CD8-positive, alpha-beta memory T cell (primary cell): ENCODE measurements at regions of chr9 and their contacts with region 1.

Region 1: GRCh38 chr9:114653556-114654159 is 3.9 kb downstream of the TEX53 start:
- DNase-seq: peak; percentile 74 to 84 (median 74)
- H3K4me3 ChIP-seq: no peak overlapping the region
- H3K4me3 Mint-ChIP-seq: no peak overlapping the region
- H3K27ac ChIP-seq: no peak overlapping the region
- H3K27ac Mint-ChIP-seq: peak overlapping the region in 1 of 8 donors; percentile 35
- H3K4me1 ChIP-seq: peaks cover 10% of the 10 kb centered on the region
- H3K4me1 Mint-ChIP-seq: peaks cover 6 to 14% (median 9%) of the 10 kb centered on the region in 3 donors
- H3K27me3 ChIP-seq: no peaks in the 10 kb centered on the region
- H3K27me3 Mint-ChIP-seq: no peaks in the 10 kb centered on the region

Region 2: GRCh38 chr9:114397848-114398605 is 255.6 kb before region 1 on chr9:
- CTCF ChIA-PET with region 1: interaction called, 13 read pairs
- POLR2A ChIA-PET with region 1: no interaction called
- DNase-seq: peak; percentile 92 to 96 (median 95)
- H3K4me3 ChIP-seq: peak overlapping the region; percentile 89
- H3K4me3 Mint-ChIP-seq: peak overlapping the region; percentile 90 to 99 (median 99)
- H3K27ac ChIP-seq: peak overlapping the region; percentile 94
- H3K27ac Mint-ChIP-seq: peak overlapping the region; percentile 95 to 100 (median 97)
- H3K4me1 ChIP-seq: peaks cover 45% of the 10 kb centered on the region
- H3K4me1 Mint-ChIP-seq: peaks cover 36 to 48% (median 43%) of the 10 kb centered on the region in 3 donors
- H3K27me3 ChIP-seq: no peaks in the 10 kb centered on the region
- H3K27me3 Mint-ChIP-seq: peaks cover 0 to 2% of the 10 kb centered on the region in 2 donors

Region 3: DNA sequence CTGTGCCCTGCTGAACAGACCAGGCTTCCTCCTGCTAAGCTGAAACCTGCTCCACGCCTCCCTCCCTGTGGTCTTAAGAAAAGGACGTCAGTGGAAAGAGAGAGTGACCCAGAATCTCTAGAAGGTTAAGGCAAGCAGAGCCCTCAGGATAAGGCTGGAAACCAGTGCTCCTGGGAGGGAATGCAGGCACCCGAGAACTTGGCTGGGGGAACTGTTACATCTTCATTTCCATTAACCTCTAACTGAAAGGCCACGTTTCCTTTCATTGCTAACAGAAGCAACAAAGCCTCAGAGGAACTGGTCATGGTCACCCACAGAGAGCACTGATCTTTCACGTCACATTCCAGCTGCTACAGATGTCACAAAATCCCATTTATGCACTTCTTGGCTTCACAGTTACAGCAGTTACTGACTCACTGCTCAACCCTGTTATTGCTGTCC is 239.8 kb before region 1 on chr9:
- CTCF ChIA-PET with region 1: interaction called, 12 read pairs
- POLR2A ChIA-PET with region 1: no interaction called
- DNase-seq: no peak
- H3K4me3 ChIP-seq: no peak overlapping the region
- H3K4me3 Mint-ChIP-seq: no peak overlapping the region
- H3K27ac ChIP-seq: no peak overlapping the region
- H3K27ac Mint-ChIP-seq: no peak overlapping the region
- H3K4me1 ChIP-seq: no peaks in the 10 kb centered on the region
- H3K4me1 Mint-ChIP-seq: peaks cover 15 to 18% (median 17%) of the 10 kb centered on the region in 3 donors
- H3K27me3 ChIP-seq: no peaks in the 10 kb centered on the region
- H3K27me3 Mint-ChIP-seq: peaks cover 0 to 1% of the 10 kb centered on the region in 2 donors

Region 4: GRCh38 chr9:114434878-114435311 is 218.8 kb before region 1 on chr9:
- CTCF ChIA-PET with region 1: interaction called, 21 read pairs
- POLR2A ChIA-PET with region 1: no interaction called
- DNase-seq: no peak
- H3K4me3 ChIP-seq: no peak overlapping the region
- H3K4me3 Mint-ChIP-seq: no peak overlapping the region
- H3K27ac ChIP-seq: no peak overlapping the region
- H3K27ac Mint-ChIP-seq: no peak overlapping the region
- H3K4me1 ChIP-seq: peaks cover 5% of the 10 kb centered on the region
- H3K4me1 Mint-ChIP-seq: peaks cover 3 to 5% (median 5%) of the 10 kb centered on the region in 3 donors
- H3K27me3 ChIP-seq: no peaks in the 10 kb centered on the region
- H3K27me3 Mint-ChIP-seq: peaks cover 0 to 1% of the 10 kb centered on the region in 2 donors

Region 5: GRCh38 chr9:114487607-114488300 is 165.9 kb before region 1 on chr9:
- CTCF ChIA-PET with region 1: interaction called, 24 read pairs
- POLR2A ChIA-PET with region 1: no interaction called
- DNase-seq: peak; percentile 16 to 75 (median 61)
- H3K4me3 ChIP-seq: no peak overlapping the region
- H3K4me3 Mint-ChIP-seq: no peak overlapping the region
- H3K27ac ChIP-seq: no peak overlapping the region
- H3K27ac Mint-ChIP-seq: peak overlapping the region in 3 of 8 donors; percentile 7 to 25 (median 12)
- H3K4me1 ChIP-seq: peaks cover 11% of the 10 kb centered on the region
- H3K4me1 Mint-ChIP-seq: peaks cover 24 to 33% (median 26%) of the 10 kb centered on the region in 3 donors
- H3K27me3 ChIP-seq: no peaks in the 10 kb centered on the region
- H3K27me3 Mint-ChIP-seq: peaks cover 0 to 2% of the 10 kb centered on the region in 2 donors

Region 6: DNA sequence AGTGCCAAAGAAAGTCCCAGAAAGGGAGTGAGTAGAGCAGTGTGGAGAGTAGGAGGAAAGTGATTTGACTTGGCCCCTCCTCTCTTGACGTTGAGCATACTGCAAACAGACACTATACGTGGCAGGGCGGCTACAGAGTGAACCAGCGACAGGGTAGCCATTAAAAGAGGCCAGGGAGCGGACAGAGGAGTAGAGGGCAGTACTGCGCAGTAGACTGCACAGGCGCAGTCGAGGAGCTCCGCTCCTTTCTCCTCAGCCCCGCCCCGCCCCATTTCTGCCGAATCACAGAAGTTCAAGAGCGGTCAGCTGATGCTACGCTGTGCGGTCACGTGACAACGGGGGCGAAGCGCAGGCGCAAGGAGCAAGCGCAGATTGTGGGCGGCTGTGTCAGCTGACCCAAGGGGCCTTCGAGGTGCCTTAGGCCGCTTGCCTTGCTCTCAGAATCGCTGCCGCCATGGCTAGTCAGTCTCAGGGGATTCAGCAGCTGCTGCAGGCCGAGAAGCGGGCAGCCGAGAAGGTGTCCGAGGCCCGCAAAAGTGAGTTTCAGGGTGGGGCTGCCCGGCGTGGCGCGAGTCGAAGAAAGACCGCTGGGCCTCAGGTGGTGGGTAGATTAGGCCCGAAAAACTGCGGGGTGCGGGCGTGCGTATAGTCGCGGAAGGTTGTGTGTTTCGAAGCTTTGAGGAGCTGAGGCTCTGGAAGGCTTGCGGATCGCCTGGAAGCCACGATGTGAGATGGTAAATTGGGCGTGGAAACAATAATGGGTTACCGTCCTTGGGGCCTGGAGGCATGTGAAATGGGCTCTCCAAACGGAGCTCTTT is 66.1 kb before region 1 on chr9 and contains the start of gene ATP6V1G1:
- CTCF ChIA-PET with region 1: interaction called, 50 read pairs
- POLR2A ChIA-PET with region 1: interaction called, 14 read pairs
- DNase-seq: peak; percentile 96 to 99 (median 99)
- H3K4me3 ChIP-seq: peak within 1 kb of the TSS; percentile 81
- H3K4me3 Mint-ChIP-seq: peak within 1 kb of the TSS; percentile 97 to 100 (median 99)
- H3K27ac ChIP-seq: peak within 1 kb of the TSS; percentile 91
- H3K27ac Mint-ChIP-seq: peak within 1 kb of the TSS; percentile 98 to 100 (median 99)
- H3K4me1 ChIP-seq: peaks cover 37% of the 10 kb centered on the region
- H3K4me1 Mint-ChIP-seq: peaks cover 51 to 55% (median 51%) of the 10 kb centered on the region in 3 donors
- H3K27me3 ChIP-seq: no peaks in the 10 kb centered on the region
- H3K27me3 Mint-ChIP-seq: peaks cover 0 to 5% of the 10 kb centered on the region in 2 donors
- total RNA-seq, gene ATP6V1G1: 48.2 to 49.0 TPM